Mammary epithelial cell (primary cell): ENCODE measurements at regions of chr10 and their contacts with region 1.

Region 1: GRCh38 chr10:132458593-132459300 is 61.7 kb downstream of the PWWP2B start:
- DNase-seq: no peak
- H3K4me3 ChIP-seq: no peak overlapping the region
- H3K27ac ChIP-seq: no peak overlapping the region
- H3K4me1 ChIP-seq: peaks cover 4% of the 10 kb centered on the region
- H3K27me3 ChIP-seq: no peaks in the 10 kb centered on the region
- CTCF ChIP-seq: peak; percentile 73 to 86

Region 2: GRCh38 chr10:132387764-132388210 is 71.0 kb before region 1 on chr10:
- CTCF ChIA-PET with region 1: no interaction called
- dilution Hi-C with region 1: loop called (anchors 5 kb)
- in situ Hi-C with region 1: loop called in 1 of 2 experiments (anchors 5 kb)
- intact Hi-C with region 1: loop called (anchors 1 kb)
- DNase-seq: no peak
- H3K4me3 ChIP-seq: no peak overlapping the region
- H3K27ac ChIP-seq: no peak overlapping the region
- H3K4me1 ChIP-seq: no peaks in the 10 kb centered on the region
- H3K27me3 ChIP-seq: no peaks in the 10 kb centered on the region
- CTCF ChIP-seq: peak; percentile 36 to 64

Region 3: DNA sequence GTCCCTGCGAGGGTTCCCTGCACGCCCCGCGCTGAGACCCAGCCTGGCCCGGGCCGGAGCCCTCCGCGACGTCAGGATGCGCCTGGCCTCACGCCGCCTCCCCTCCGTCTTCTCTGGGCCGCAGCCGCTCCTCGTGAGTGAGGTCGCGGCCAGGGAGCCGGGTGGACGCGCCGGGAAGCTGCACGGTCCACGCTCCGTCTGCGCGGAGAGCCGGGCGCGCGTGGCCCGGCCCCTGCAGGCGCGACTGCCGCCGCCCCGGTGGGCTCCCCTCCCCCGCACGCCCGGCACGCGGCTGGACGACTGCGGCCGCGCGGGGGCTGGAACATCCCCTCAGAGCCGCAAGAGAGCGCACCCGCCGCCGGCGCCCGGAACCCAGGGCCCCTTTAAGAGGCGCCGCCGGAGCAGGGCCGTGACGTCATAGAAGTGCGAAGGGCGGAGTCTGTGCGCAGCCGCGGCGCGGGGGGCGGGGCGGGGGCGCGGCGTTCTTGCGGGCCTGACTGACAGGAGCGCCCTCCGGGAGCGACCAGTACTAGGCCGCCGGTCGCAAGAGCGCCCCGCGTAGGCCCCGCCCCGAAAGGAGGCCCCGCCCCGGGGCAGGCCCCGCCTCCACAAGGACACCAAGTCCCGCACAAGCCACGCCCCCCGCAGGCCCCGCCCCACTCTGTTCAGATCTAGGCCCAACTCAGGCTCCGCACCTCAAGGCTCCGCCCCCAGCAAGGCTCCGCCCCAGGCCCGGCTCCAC is 78.4 kb after region 1 on chr10:
- CTCF ChIA-PET with region 1: interaction called, 5 read pairs
- dilution Hi-C with region 1: no loop called
- in situ Hi-C with region 1: no loop called
- intact Hi-C with region 1: loop called (anchors 5 kb)
- DNase-seq: peak; percentile 99
- H3K4me3 ChIP-seq: peak overlapping the region; percentile 45 to 83 (median 73)
- H3K27ac ChIP-seq: no peak overlapping the region
- H3K4me1 ChIP-seq: peaks cover 28% of the 10 kb centered on the region
- H3K27me3 ChIP-seq: no peaks in the 10 kb centered on the region
- CTCF ChIP-seq: no peak

Region 4: DNA sequence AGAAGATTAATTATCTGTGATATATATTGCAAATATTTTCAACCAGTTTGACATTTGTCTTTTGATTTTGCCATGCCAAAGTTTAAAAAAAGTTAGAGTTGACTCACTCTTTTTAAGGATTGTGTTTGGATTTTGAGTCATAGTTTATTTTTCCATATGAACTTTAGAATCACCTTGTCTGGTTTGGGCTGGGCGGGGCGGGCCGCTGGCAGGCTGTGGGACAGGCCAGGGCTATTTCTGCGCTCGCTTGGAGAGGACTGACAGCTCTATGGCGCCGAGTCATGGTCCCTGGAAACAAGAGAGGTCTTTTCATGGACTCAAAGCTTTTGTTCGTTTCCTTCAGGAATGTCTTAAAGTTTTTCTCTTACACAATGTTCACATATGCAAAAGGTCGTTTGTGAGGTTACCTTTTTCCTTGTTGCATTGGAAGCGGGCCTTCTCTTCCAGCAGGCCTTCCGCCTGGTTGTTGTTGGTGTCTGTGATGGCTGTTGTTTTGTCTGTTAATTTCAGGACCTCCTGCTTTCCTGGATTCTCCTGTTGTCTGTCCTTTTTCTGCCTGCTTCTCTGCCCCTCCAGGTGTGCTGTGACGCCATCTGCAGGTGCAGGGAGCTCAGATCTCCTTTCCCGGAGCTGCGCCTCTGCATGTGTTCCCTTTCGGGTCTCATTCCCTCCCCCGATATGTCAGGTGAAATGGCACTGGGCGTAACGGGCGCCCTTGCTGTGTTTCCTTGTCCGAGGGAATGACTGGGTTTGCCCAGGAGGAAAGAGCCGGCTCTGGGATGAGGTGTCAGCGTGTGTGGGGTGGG is 132.6 kb after region 1 on chr10:
- CTCF ChIA-PET with region 1: no interaction called
- dilution Hi-C with region 1: no loop called
- in situ Hi-C with region 1: no loop called
- intact Hi-C with region 1: loop called (anchors 1 kb)
- DNase-seq: peak; percentile 68
- H3K4me3 ChIP-seq: no peak overlapping the region
- H3K27ac ChIP-seq: no peak overlapping the region
- H3K4me1 ChIP-seq: peaks cover 18% of the 10 kb centered on the region
- H3K27me3 ChIP-seq: no peaks in the 10 kb centered on the region
- CTCF ChIP-seq: peak in 1 of 2 donors; percentile 37

Region 5: GRCh38 chr10:132637477-132638129 is 178.9 kb after region 1 on chr10:
- CTCF ChIA-PET with region 1: no interaction called
- dilution Hi-C with region 1: no loop called
- in situ Hi-C with region 1: loop called (anchors 5 kb)
- intact Hi-C with region 1: loop called (anchors 1 kb)
- DNase-seq: peak; percentile 26
- H3K4me3 ChIP-seq: no peak overlapping the region
- H3K27ac ChIP-seq: no peak overlapping the region
- H3K4me1 ChIP-seq: no peaks in the 10 kb centered on the region
- H3K27me3 ChIP-seq: no peaks in the 10 kb centered on the region
- CTCF ChIP-seq: peak; percentile 70 to 87